ENCODE measurements at regions of chr7 and their contacts with region 1.

Region 1: GRCh38 chr7:31744294-31744874 is 57.4 kb downstream of the PPP1R17 start:
- DNase-seq: peak; percentile 32 to 61 (median 54)
- H3K4me3 ChIP-seq: no peak overlapping the region
- H3K4me3 Mint-ChIP-seq: no peak overlapping the region
- H3K27ac ChIP-seq: no peak overlapping the region
- H3K27ac Mint-ChIP-seq: no peak overlapping the region
- H3K4me1 ChIP-seq: no peaks in the 10 kb centered on the region
- H3K4me1 Mint-ChIP-seq: no peaks in the 10 kb centered on the region
- H3K27me3 ChIP-seq: peaks cover 0 to 2% of the 10 kb centered on the region in 2 donors
- H3K27me3 Mint-ChIP-seq: peaks cover 0 to 16% (median 10%) of the 10 kb centered on the region in 3 donors
- CTCF ChIP-seq: peak; percentile 89

Region 2: DNA sequence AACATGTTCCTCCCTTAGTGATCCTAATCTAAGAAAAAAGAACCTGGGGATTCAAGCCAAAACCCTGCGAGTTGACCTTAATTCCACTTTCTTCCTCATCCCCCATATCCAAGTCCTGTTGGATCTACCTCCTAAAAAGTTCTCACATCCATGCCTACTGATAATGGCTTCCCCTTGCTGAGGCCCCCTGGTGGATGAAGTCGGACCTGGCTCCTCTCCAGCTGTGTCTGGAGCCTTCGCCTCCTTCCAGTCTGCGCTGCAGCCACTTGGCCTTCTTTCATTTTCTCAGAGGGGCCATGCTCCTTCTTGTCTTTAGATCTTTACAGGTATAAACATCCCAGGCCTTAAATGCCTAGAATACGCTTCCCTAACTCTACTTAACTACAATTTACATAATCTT is 317.8 kb after region 1 on chr7:
- intact Hi-C with region 1: loop called (anchors 5 to 10 kb)
- DNase-seq: peak; percentile 2 to 29 (median 7)
- H3K4me3 ChIP-seq: no peak overlapping the region
- H3K4me3 Mint-ChIP-seq: no peak overlapping the region
- H3K27ac ChIP-seq: no peak overlapping the region
- H3K27ac Mint-ChIP-seq: no peak overlapping the region
- H3K4me1 ChIP-seq: no peaks in the 10 kb centered on the region
- H3K4me1 Mint-ChIP-seq: no peaks in the 10 kb centered on the region
- H3K27me3 ChIP-seq: no peaks in the 10 kb centered on the region
- H3K27me3 Mint-ChIP-seq: peaks cover under 1 to 5% (median 4%) of the 10 kb centered on the region in 3 donors
- CTCF ChIP-seq: peak; percentile 61

Region 3: DNA sequence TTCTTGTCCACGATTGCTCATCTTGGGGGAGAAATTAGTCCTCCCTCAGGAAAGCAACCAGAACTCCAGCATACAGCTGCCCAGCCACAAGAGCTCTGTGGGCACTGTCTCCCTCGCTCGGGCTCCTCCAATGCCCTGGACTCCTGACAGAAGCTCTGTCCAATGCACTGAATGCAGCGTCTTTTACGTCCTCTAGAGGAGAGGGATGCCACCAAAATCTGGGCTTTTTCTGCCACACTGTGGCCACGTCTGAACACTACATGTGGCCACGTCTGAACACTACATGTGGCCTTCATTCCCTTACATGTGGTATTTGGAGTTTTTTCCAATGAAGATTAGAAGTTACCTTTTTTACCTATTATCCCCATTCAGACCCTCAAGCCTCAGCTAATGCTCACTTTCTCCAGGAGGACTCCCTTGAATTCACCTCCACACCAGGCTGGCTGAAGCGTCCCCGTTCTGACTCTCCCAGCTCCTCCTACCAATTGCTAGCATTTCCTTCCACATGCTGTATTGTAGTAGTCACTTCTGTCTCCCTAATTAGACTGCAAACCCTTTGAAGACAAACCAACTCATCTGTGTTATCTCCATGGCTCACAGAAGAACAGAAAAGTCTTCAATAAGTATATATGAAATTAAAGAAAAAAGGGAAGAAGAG is 460.1 kb after region 1 on chr7:
- intact Hi-C with region 1: loop called (anchors 5 to 10 kb)
- DNase-seq: no peak
- H3K4me3 ChIP-seq: no peak overlapping the region
- H3K4me3 Mint-ChIP-seq: no peak overlapping the region
- H3K27ac ChIP-seq: no peak overlapping the region
- H3K27ac Mint-ChIP-seq: no peak overlapping the region
- H3K4me1 ChIP-seq: no peaks in the 10 kb centered on the region
- H3K4me1 Mint-ChIP-seq: no peaks in the 10 kb centered on the region
- H3K27me3 ChIP-seq: no peaks in the 10 kb centered on the region
- H3K27me3 Mint-ChIP-seq: peaks cover 0 to 3% (median 0%) of the 10 kb centered on the region in 3 donors
- CTCF ChIP-seq: no peak

Region 4: GRCh38 chr7:32347244-32347828 is 603.0 kb after region 1 on chr7:
- intact Hi-C with region 1: loop called (anchors 2 to 5 kb)
- DNase-seq: peak in 2 of 3 donors; percentile 2 to 11
- H3K4me3 ChIP-seq: no peak overlapping the region
- H3K4me3 Mint-ChIP-seq: no peak overlapping the region
- H3K27ac ChIP-seq: no peak overlapping the region
- H3K27ac Mint-ChIP-seq: no peak overlapping the region
- H3K4me1 ChIP-seq: no peaks in the 10 kb centered on the region
- H3K4me1 Mint-ChIP-seq: no peaks in the 10 kb centered on the region
- H3K27me3 ChIP-seq: no peaks in the 10 kb centered on the region
- H3K27me3 Mint-ChIP-seq: no peaks in the 10 kb centered on the region
- CTCF ChIP-seq: peak; percentile 92

Region 5: DNA sequence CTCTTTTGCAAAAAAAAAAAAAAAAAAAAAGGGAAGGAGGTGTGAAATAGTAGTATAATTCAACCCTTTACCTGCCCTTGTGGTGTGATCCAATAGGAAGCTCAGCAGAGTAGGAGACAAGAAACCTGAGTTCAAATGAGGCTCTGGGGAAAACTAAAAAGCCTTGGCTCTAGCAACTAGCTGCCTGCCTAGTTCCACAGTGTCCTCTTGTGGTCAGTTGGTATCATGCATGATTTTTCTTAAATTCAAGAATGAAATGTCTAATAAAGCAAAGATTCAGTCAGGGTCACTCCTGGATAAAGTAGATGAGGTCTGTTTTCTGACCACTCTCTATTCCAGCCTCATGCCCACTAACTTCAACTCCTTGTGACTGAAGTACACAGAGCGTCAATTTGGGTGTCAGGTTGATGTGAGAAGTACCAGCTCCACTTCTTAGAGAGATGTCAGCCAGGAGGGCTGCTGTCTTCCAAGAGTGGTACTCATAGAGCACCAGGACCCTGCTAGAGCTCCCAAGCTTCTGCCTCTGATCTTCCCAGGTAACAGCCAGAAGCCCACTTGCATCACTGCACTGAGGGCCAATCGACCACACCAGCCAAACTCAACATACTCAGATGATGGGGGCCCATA is 735.3 kb after region 1 on chr7:
- intact Hi-C with region 1: loop called (anchors 10 kb)
- DNase-seq: peak in 1 of 3 donors; percentile 28
- H3K4me3 ChIP-seq: no peak overlapping the region
- H3K4me3 Mint-ChIP-seq: no peak overlapping the region
- H3K27ac ChIP-seq: no peak overlapping the region
- H3K27ac Mint-ChIP-seq: no peak overlapping the region
- H3K4me1 ChIP-seq: no peaks in the 10 kb centered on the region
- H3K4me1 Mint-ChIP-seq: no peaks in the 10 kb centered on the region
- H3K27me3 ChIP-seq: no peaks in the 10 kb centered on the region
- H3K27me3 Mint-ChIP-seq: peaks cover 0 to 4% (median 2%) of the 10 kb centered on the region in 3 donors
- CTCF ChIP-seq: peak; percentile 73